GM10248 (cell line): ENCODE measurements at regions of chr9 and their contacts with region 1.

Region 1: DNA sequence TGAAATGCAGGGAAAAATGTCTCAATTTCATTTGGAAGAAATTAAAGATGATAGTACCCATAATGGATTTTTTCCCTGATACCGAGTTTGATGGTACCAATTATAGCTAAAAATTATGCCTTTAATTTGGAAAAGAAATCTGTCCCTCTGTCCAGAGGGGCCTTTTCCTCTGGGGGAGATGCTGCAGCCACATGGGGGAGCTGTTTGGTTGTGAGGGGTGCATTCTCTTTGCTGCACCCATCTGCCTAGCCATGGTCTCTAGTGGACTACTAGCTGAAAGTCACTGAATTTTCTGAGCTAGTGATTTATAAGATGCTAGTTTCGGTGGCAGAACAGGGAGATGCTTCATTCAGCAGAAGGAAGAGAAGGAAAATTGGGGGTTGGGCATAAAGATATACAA is 9.6 kb downstream of the SEC61B start:
- DNase-seq: peak; percentile 40
- CTCF ChIP-seq: peak; percentile 74

Region 2: DNA sequence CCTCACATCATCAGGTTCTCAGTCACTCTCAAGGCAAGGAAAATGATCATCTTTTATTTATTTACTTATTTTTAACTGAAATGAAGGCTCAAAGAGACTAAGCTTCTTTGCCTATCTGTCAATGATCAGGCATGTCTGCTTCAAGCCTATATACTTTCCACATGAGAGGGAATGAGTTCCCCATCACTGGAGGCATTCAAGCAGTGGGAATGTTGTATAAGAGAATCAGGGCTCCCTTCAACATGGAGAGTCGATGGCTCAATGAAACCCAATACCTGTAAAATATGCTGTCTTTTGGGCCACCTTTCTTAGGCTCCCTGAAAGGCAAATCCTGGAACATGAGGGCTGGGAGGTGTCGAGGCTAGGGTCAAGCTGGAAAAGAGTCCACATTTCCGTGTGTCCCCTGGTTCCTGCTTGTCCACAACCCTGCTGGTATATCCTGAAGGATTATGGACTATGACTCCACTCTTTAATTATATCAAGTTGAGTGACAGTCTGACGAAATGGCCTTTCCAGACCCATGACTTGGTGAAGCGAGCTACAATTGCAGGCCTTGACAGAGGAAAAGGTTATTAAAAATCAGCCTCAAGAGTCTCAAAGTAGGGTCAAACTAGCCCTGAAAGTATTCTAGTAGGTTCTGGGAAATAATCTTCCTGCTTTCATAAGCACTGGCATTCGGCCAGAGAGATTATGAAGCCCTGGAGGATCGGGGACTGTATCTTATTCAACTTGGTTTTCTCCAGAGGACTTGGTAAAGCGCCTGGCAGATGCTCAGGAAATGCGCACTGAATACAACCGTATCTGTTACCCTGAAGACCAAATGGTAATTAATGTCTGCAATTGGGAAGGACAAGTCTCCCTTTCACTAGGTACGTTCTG is 830.3 kb before region 1 on chr9:
- CTCF ChIA-PET with region 1: no interaction called
- POLR2A ChIA-PET with region 1: no interaction called
- DNase-seq: no peak
- CTCF ChIP-seq: no peak

Region 3: DNA sequence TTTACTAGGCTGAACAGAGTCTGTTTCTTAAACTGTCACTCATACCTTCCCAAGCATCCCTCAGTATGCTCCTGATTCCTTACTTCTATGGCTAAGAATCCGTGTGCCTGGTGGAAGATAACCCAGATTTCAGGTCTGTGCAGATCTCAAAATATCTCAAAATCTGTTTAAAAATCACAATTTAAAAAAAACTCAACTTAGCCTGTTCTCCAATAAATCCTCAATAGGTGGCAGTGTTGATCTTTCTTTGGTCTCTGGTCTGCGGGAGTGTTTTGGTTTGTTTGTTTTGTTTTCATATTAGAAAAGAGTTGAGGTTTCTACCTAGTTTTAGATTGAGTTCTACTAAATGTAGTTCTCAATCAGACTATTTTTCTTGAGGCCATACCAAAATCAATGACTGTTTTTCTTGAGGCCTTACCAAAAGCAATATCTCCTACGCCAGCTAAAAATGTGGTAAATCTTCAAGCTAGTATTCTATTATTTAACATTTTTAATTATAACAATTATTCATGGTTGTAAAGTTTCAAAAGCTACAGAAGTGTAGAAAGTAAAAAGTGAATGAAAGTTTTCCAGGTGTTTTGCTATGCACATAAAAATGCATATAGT is 68.8 kb before region 1 on chr9:
- CTCF ChIA-PET with region 1: interaction called, 20 read pairs
- POLR2A ChIA-PET with region 1: no interaction called
- DNase-seq: peak; percentile 58
- CTCF ChIP-seq: peak; percentile 66

Region 4: GRCh38 chr9:99197987-99198386 is 33.7 kb before region 1 on chr9:
- CTCF ChIA-PET with region 1: interaction called, 19 read pairs
- POLR2A ChIA-PET with region 1: no interaction called
- DNase-seq: no peak
- CTCF ChIP-seq: no peak

Region 5: DNA sequence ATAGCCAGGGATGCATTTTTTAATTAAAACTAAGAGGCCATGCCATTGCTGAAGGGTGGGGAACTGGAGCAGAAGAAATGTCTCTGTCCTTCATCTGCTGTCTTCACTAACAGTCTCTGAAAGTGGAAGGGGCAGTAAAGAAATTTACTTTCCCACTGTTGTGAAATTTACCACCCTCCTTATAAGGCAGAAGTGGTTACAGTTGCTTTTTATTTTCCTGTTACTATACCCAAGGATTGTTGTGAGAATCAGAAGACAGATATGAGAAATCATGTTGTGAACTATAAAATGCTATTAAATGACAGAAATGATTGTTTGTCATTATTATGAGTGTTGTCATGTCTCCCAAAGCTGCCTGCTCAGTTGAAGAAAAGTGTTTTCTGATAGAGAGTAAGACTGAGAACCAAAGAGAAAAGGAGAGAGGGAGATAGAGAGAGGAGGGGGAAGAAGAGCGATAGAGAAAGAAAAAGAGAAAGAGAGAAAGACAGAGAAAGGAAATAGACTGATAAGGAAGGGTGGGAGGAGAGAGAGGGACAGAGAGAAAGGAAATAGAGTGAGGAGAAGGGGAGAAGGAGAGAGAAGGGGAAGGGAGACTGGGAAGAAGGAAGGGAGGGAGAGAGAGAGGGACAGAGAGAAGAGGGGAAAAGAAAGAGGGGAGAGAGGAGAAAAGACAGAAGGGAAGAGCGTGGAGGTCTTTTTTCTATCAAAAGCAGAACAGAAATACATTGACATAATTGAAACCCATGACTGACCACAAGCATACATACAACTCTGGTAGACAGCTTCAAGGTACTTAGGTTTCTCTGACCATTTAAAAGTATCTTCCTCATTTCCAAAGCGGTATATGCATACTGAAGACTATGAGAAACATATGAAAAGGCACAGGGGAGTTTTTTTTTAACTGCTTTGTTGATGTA is 12.9 kb after region 1 on chr9:
- CTCF ChIA-PET with region 1: interaction called, 45 read pairs
- POLR2A ChIA-PET with region 1: interaction called, 3 read pairs
- DNase-seq: peak; percentile 68
- CTCF ChIP-seq: no peak

Region 6: DNA sequence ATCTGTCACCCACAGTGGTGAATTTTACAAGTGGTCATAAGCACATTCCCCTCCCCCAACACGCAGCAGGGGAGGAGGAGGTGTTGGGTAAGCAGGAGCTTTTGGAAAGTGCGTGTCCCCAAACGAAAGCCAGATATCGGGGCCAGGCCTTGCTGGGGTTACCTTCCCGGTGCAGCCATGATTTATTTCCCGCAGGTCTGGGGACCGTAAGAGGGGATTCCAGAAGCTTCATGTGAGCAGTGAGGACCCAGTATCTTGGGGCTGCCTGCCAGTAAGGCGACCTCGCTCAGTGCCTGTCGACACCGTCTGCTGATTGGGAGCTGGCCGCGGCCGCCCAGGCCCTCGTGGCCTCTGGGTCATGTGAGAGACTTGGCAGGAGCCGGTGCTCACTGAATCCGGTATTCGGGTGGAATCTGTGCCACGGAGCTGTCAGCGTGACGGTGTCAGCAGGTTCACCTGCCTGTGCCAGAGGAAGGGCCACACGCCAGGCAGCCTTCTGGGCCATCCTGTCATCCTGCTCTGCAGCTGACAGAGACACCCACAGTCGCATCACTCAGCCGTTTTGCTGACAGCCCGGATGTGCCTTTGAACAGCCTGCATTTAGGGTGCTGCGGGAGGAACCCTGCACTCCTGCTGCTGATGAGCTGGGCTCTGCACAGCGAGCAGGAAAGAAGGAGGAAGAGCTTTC is 27.7 kb after region 1 on chr9:
- CTCF ChIA-PET with region 1: interaction called, 45 read pairs
- POLR2A ChIA-PET with region 1: interaction called, 6 read pairs
- DNase-seq: peak; percentile 32
- CTCF ChIP-seq: no peak

Region 7: DNA sequence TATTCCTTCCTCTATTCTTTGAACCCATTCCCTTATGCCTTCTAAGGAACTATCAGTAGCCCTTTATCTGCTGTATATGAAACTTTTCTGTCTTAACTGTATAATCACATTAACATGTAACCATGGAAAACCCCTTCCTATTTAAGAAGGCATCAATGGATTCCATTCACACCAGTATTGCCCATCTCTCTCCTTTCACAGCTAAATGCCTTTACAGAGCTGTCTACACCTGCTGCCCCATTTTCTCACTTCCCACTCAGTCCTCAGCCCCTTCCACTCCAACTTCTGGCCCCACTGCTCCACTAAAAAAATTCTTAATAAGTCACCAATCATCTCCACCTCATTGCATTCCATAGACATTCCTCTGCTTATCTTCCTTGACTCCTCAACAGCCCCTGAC is 41.1 kb after region 1 on chr9:
- CTCF ChIA-PET with region 1: interaction called, 15 read pairs
- POLR2A ChIA-PET with region 1: no interaction called
- DNase-seq: no peak
- CTCF ChIP-seq: no peak